ENCODE measurements at regions of chr3 and their contacts with region 1.

Region 1: GRCh38 chr3:133448478-133449122 is 48.7 kb downstream of the BFSP2 start:
- DNase-seq: peak; percentile 77
- ATAC-seq: peak; percentile 93
- H3K4me3 Mint-ChIP-seq: no peak overlapping the region
- H3K27ac Mint-ChIP-seq: peak overlapping the region; percentile 69
- H3K4me1 Mint-ChIP-seq: peaks cover 38% of the 10 kb centered on the region
- H3K27me3 Mint-ChIP-seq: no peaks in the 10 kb centered on the region

Region 2: GRCh38 chr3:133494469-133494868 is 45.9 kb after region 1 on chr3:
- CTCF ChIA-PET with region 1: interaction called, 4 read pairs
- POLR2A ChIA-PET with region 1: interaction called, 5 read pairs
- intact Hi-C with region 1: loop called in 1 of 2 experiments (anchors 5 kb)
- DNase-seq: peak; percentile 36
- ATAC-seq: no peak
- H3K4me3 Mint-ChIP-seq: no peak overlapping the region
- H3K27ac Mint-ChIP-seq: no peak overlapping the region
- H3K4me1 Mint-ChIP-seq: peaks cover 45% of the 10 kb centered on the region
- H3K27me3 Mint-ChIP-seq: no peaks in the 10 kb centered on the region

Region 3: GRCh38 chr3:133661454-133662277 is 213.1 kb after region 1 on chr3 and contains the start of gene TOPBP1:
- CTCF ChIA-PET with region 1: no interaction called
- POLR2A ChIA-PET with region 1: no interaction called
- intact Hi-C with region 1: loop called (anchors 5 kb)
- DNase-seq: peak; percentile 94
- ATAC-seq: peak; percentile 85
- H3K4me3 Mint-ChIP-seq: peak within 1 kb of the TSS; percentile 91
- H3K27ac Mint-ChIP-seq: peak within 1 kb of the TSS; percentile 98
- H3K4me1 Mint-ChIP-seq: peaks cover 33% of the 10 kb centered on the region
- H3K27me3 Mint-ChIP-seq: no peaks in the 10 kb centered on the region
- total RNA-seq, gene TOPBP1: 80.9 to 94.6 TPM